Posterior cingulate gyrus (tissue), 11 donors: ENCODE measurements at regions of chr3 and their contacts with region 1.

Region 1: DNA sequence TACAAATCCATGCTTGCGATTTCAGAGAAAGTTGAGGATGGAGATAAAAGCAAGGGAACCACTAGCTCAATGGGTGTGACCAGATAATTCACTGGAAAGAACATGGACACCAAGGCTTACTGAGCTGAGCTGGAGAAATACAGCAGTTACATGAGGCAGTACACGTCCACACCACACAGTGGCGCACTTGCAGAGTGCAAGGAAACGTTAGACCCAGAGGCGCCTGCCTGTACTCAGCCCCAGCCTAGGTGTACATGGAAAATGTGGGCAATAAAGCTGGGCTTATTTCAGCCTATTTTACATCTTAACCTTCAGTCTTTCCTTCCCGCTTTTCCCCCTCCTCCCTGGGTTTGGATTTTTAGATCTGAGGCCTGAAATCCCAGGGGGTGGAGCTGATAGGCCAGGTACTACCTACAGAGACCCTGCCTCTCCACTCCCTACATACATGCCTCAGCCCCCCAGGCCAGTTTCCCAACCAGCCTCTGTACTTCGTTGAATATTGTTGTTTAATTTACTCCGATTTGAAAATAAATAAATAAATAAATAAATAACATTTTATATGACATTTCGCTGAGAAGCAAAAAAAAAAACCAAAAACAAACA is 60.1 kb downstream of the PCOLCE2 start:
- DNase-seq: peak; percentile 65 to 96 (median 84)

Region 2: GRCh38 chr3:142586803-142587406 is 241.9 kb before region 1 on chr3:
- intact Hi-C with region 1: loop called (anchors 5 kb)
- DNase-seq: peak in 2 of 10 donors; percentile 13

Region 3: DNA sequence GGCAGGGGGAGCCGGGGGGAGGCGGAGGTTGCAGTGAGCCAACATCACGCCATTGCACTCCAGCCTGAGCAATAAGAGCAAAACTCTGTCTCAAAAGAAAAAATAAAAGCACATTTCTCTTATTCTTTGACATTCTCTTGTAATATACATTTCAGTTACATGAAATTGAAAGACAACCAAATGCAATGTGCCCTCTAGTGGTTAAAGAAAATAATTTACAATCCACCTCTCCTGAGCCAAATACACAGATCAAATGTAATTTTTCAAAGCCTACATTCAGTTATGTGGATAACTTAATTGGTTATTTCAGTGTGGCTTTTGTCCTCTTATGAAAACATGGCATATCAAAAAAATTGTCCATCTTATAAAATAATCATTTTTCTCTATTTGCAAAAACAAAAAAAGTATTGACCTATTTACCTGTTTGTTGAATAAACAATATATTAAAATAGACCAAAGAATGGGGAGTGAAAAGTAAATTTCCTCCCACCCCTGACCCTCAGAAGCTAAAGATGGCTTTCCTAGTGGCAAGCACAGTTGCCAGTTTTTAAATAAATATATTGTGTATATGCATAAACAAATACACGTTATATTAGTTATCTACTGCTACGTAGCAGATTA is 158.4 kb after region 1 on chr3:
- intact Hi-C with region 1: loop called (anchors 2 kb)
- DNase-seq: no peak

Region 4: DNA sequence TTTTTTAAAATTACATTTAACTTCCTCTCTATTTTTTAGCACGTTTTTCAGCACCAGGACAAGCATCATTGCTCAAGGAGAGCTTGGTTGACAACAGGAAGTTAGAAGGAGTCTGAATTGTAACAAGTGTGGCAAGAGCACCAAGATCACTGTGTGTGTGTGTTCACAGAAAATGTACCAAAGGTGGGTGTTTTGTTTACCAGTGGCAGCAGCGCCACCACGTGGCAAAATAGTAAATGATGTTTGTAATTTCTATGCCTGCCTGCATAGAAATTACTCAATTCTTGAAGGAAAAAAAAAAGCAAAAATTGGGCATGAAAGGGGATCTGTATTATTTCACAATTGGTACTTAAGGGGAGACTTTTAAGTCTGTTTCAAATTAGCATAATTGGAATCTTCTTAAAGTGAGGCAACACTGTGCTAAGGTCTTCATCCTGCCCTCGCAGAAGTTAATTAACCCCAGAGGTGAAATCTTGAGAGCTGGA is 165.2 kb after region 1 on chr3:
- intact Hi-C with region 1: loop called (anchors 2 kb)
- DNase-seq: peak in 7 of 10 donors; percentile 48 to 90 (median 63)